ENCODE measurements at regions of chr7 and their contacts with region 1.

Region 1: DNA sequence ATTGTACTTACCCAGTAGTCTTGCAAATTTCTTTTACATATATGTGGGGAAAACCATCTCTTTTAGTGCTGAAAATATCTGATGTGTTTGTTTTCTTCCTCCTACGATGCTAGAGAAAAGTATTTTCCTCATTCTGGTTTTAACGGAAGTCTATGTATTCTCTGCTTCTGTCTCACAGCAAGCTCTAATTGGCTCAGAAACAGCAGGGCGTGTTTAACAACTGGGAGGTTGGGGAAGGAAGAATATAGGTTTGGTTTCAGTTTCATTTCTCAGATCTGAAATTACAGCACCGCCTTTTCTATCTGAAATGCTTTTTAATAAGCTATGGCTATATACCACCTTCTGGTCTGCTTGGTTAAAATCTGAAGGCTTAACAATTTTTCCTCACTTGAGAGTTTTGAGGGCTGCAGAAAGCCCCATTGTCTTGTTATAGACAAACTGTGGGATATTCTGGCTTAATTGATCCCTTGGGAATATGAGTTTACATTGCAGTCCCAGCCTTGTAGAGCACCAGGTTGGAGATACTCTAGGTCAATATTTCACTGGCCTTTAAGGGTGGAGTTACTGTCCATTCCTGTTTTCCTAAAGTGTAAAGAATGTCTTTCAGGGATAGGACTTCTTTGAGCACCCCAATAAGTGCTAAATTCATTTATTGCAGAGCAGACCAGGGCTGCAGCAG is at the start of gene SAMD9:
- DNase-seq: peak; percentile 86
- ATAC-seq: peak; percentile 99
- H3K4me3 ChIP-seq: peak within 1 kb of the TSS; percentile 41 to 92 (median 59)
- H3K4me3 Mint-ChIP-seq: peak within 1 kb of the TSS; percentile 85
- H3K27ac ChIP-seq: peak within 1 kb of the TSS; percentile 56 to 83
- H3K27ac Mint-ChIP-seq: peak within 1 kb of the TSS; percentile 74
- H3K4me1 ChIP-seq: peaks cover 18 to 33% of the 10 kb centered on the region in 2 donors
- H3K4me1 Mint-ChIP-seq: peaks cover 44% of the 10 kb centered on the region
- H3K27me3 ChIP-seq: no peaks in the 10 kb centered on the region
- H3K27me3 Mint-ChIP-seq: no peaks in the 10 kb centered on the region
- CTCF ChIP-seq: no peak
- total RNA-seq, gene SAMD9: 39.2 and 42.1 TPM in 2 replicates

Region 2: GRCh38 chr7:92134271-92135051 is 983.5 kb before region 1 on chr7 and contains the start of gene CYP51A1:
- CTCF ChIA-PET with region 1: no interaction called
- POLR2A ChIA-PET with region 1: no interaction called
- intact Hi-C with region 1: loop called (anchors 10 kb)
- DNase-seq: peak; percentile 99
- ATAC-seq: peak; percentile 84
- H3K4me3 ChIP-seq: peak within 1 kb of the TSS; percentile 86 to 94 (median 90)
- H3K4me3 Mint-ChIP-seq: peak within 1 kb of the TSS; percentile 99
- H3K27ac ChIP-seq: peak within 1 kb of the TSS; percentile 94 to 98
- H3K27ac Mint-ChIP-seq: peak within 1 kb of the TSS; percentile 100
- H3K4me1 ChIP-seq: peaks cover 18 to 27% of the 10 kb centered on the region in 2 donors
- H3K4me1 Mint-ChIP-seq: peaks cover 39% of the 10 kb centered on the region
- H3K27me3 ChIP-seq: no peaks in the 10 kb centered on the region
- H3K27me3 Mint-ChIP-seq: no peaks in the 10 kb centered on the region
- CTCF ChIP-seq: no peak
- total RNA-seq, gene CYP51A1: 36.1 and 37.9 TPM in 2 replicates

Region 3: DNA sequence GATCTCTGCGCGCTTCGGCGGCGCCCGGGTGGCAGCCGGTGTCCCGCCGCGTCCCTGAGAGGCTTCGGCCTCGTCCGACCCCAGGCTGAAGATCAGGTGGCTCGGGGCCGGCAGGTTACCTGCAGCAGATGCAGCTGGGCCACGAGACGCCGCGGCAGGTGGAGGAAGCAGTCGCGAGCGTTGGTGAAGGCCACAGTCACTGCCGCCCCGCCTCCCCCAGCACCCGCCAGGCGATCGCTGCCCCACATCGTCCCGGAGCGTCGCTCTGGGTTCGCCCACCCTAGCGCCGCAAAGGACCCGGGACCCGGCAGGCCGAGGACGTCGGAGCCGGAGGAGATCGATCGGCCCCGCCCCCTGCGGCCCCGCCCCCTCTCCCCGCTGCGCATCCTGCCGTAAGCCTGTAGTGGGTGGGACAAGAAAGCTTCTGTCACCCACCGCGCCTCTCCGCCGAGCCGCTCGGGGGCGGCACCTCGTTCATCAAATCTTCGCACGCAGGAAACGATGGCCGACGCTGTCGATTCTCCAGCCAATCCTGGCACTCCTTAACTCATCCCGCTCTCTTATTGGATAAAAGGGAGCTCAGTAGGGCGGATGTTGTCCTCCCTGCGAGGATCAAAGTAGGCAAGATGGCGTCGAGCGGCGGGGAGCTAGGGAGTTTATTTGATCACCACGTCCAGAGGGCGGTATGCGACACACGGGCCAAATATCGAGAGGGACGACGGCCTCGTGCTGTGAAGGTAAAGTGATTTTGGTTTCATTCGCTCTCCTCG is 589.6 kb before region 1 on chr7 and contains the starts of genes PEX1 and RBM48:
- CTCF ChIA-PET with region 1: no interaction called
- POLR2A ChIA-PET with region 1: interaction called, 6 read pairs
- intact Hi-C with region 1: loop called (anchors 2 kb)
- DNase-seq: peak; percentile 98
- ATAC-seq: peak; percentile 91
- H3K4me3 ChIP-seq: peak within 1 kb of the TSS; percentile 81 to 99 (median 95)
- H3K4me3 Mint-ChIP-seq: peak within 1 kb of the TSS; percentile 88
- H3K27ac ChIP-seq: peak within 1 kb of the TSS; percentile 89 to 96
- H3K27ac Mint-ChIP-seq: peak within 1 kb of the TSS; percentile 95
- H3K4me1 ChIP-seq: peaks cover 14 to 19% of the 10 kb centered on the region in 2 donors
- H3K4me1 Mint-ChIP-seq: peaks cover 26% of the 10 kb centered on the region
- H3K27me3 ChIP-seq: no peaks in the 10 kb centered on the region
- H3K27me3 Mint-ChIP-seq: no peaks in the 10 kb centered on the region
- CTCF ChIP-seq: peak; percentile 31
- total RNA-seq, gene PEX1: 33.7 and 34.8 TPM in 2 replicates
- total RNA-seq, gene RBM48: 32.9 and 36.8 TPM in 2 replicates

Region 4: GRCh38 chr7:92590711-92591310 is 527.2 kb before region 1 on chr7:
- CTCF ChIA-PET with region 1: no interaction called
- POLR2A ChIA-PET with region 1: no interaction called
- intact Hi-C with region 1: loop called (anchors 2 kb)
- DNase-seq: no peak
- ATAC-seq: no peak
- H3K4me3 ChIP-seq: peak overlapping the region in 4 of 5 experiments; percentile 84 to 88 (median 86)
- H3K4me3 Mint-ChIP-seq: peak overlapping the region; percentile 94
- H3K27ac ChIP-seq: no peak overlapping the region
- H3K27ac Mint-ChIP-seq: peak overlapping the region; percentile 11
- H3K4me1 ChIP-seq: peaks cover 22 to 25% of the 10 kb centered on the region in 2 donors
- H3K4me1 Mint-ChIP-seq: peaks cover 41% of the 10 kb centered on the region
- H3K27me3 ChIP-seq: no peaks in the 10 kb centered on the region
- H3K27me3 Mint-ChIP-seq: no peaks in the 10 kb centered on the region
- CTCF ChIP-seq: no peak

Region 5: GRCh38 chr7:93147363-93147762 is 29.4 kb after region 1 on chr7:
- CTCF ChIA-PET with region 1: interaction called, 5 read pairs
- POLR2A ChIA-PET with region 1: no interaction called
- intact Hi-C with region 1: loop called (anchors 1 kb)
- DNase-seq: peak; percentile 43
- ATAC-seq: peak; percentile 67
- H3K4me3 ChIP-seq: peak overlapping the region; percentile 43 to 93 (median 62)
- H3K4me3 Mint-ChIP-seq: peak overlapping the region; percentile 90
- H3K27ac ChIP-seq: peak overlapping the region in 1 of 2 donors; percentile 85
- H3K27ac Mint-ChIP-seq: peak overlapping the region; percentile 85
- H3K4me1 ChIP-seq: peaks cover 40 to 47% of the 10 kb centered on the region in 2 donors
- H3K4me1 Mint-ChIP-seq: peaks cover 48% of the 10 kb centered on the region
- H3K27me3 ChIP-seq: no peaks in the 10 kb centered on the region
- H3K27me3 Mint-ChIP-seq: no peaks in the 10 kb centered on the region
- CTCF ChIP-seq: no peak

Region 6: GRCh38 chr7:93165447-93165846 is 47.5 kb after region 1 on chr7:
- CTCF ChIA-PET with region 1: no interaction called
- POLR2A ChIA-PET with region 1: no interaction called
- intact Hi-C with region 1: loop called (anchors 5 kb)
- DNase-seq: peak; percentile 77
- ATAC-seq: peak; percentile 93
- H3K4me3 ChIP-seq: peak overlapping the region in 2 of 5 experiments; percentile 5 to 15
- H3K4me3 Mint-ChIP-seq: peak overlapping the region; percentile 38
- H3K27ac ChIP-seq: peak overlapping the region; percentile 59 to 81
- H3K27ac Mint-ChIP-seq: peak overlapping the region; percentile 74
- H3K4me1 ChIP-seq: peaks cover 4 to 8% of the 10 kb centered on the region in 2 donors
- H3K4me1 Mint-ChIP-seq: peaks cover 19% of the 10 kb centered on the region
- H3K27me3 ChIP-seq: no peaks in the 10 kb centered on the region
- H3K27me3 Mint-ChIP-seq: no peaks in the 10 kb centered on the region
- CTCF ChIP-seq: no peak

Region 7: GRCh38 chr7:93185303-93186027 is 67.5 kb after region 1 on chr7:
- CTCF ChIA-PET with region 1: no interaction called
- POLR2A ChIA-PET with region 1: no interaction called
- intact Hi-C with region 1: no loop called
- DNase-seq: no peak
- ATAC-seq: no peak
- H3K4me3 ChIP-seq: no peak overlapping the region
- H3K4me3 Mint-ChIP-seq: no peak overlapping the region
- H3K27ac ChIP-seq: no peak overlapping the region
- H3K27ac Mint-ChIP-seq: no peak overlapping the region
- H3K4me1 ChIP-seq: no peaks in the 10 kb centered on the region
- H3K4me1 Mint-ChIP-seq: no peaks in the 10 kb centered on the region
- H3K27me3 ChIP-seq: peaks cover 0 to 13% (median 4%) of the 10 kb centered on the region in 4 experiments
- H3K27me3 Mint-ChIP-seq: peaks cover 45% of the 10 kb centered on the region
- CTCF ChIP-seq: no peak

Region 8: GRCh38 chr7:93390660-93391059 is 272.7 kb after region 1 on chr7:
- CTCF ChIA-PET with region 1: no interaction called
- POLR2A ChIA-PET with region 1: no interaction called
- intact Hi-C with region 1: no loop called
- DNase-seq: no peak
- ATAC-seq: no peak
- H3K4me3 ChIP-seq: no peak overlapping the region
- H3K4me3 Mint-ChIP-seq: no peak overlapping the region
- H3K27ac ChIP-seq: no peak overlapping the region
- H3K27ac Mint-ChIP-seq: no peak overlapping the region
- H3K4me1 ChIP-seq: no peaks in the 10 kb centered on the region
- H3K4me1 Mint-ChIP-seq: no peaks in the 10 kb centered on the region
- H3K27me3 ChIP-seq: peaks cover 0 to 3% (median 0%) of the 10 kb centered on the region in 4 experiments
- H3K27me3 Mint-ChIP-seq: peaks cover 27% of the 10 kb centered on the region
- CTCF ChIP-seq: no peak

Region 9: DNA sequence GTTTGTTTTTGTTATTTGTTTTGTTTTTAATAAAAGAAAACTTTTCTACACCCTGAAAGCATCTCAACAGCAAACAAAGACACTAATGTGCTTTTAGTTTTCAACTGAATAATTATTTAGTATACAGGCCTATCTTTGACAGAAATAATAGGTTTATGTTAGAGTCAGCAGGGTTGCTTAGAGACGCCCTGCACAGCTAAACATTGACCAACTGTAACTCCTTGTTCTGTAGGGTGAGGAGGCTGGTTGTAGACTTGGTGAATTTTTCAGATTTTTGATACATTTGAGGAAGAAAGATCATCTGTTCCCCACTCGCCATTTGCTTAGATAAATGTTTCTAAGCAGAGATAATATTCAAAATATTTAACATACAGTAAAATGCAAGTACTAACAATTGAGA is 353.5 kb after region 1 on chr7:
- CTCF ChIA-PET with region 1: no interaction called
- POLR2A ChIA-PET with region 1: no interaction called
- intact Hi-C with region 1: no loop called
- DNase-seq: no peak
- ATAC-seq: no peak
- H3K4me3 ChIP-seq: no peak overlapping the region
- H3K4me3 Mint-ChIP-seq: no peak overlapping the region
- H3K27ac ChIP-seq: no peak overlapping the region
- H3K27ac Mint-ChIP-seq: no peak overlapping the region
- H3K4me1 ChIP-seq: no peaks in the 10 kb centered on the region
- H3K4me1 Mint-ChIP-seq: no peaks in the 10 kb centered on the region
- H3K27me3 ChIP-seq: peaks cover 0 to 4% (median 0%) of the 10 kb centered on the region in 4 experiments
- H3K27me3 Mint-ChIP-seq: peaks cover 12% of the 10 kb centered on the region
- CTCF ChIP-seq: no peak

Region 10: DNA sequence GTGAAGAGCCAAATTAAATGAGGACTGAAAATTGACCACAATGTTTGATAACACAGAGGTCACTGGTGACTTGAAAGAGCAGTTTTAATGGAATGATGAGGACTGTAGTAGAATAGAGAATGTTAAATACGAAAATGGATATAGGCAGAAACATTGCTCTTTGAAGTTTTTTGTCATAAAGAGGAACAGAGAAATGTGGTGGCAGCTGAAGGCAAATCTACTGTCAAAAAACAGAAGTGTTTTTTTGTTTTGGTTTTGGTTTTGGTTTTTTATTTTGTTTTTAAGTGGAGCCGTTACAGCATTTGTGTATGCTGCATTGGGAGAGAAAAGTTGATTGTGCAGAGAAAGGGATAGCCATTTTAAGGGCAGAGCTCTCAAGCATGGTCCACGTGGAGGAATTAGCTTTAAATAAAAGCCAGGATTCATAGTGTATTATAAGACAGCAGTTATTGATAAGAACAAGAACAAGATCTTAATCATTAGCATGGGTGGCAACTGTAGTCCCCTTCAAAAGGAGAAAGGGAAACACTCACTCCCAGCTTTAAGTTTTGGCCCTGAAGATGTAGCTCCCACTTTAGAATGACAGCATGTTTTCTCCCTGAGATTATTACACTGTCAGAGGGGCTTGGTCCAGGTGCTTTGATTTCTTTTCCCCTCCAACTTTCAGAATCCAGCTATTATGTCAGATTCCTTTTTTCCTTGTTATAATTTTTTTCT is 1042.9 kb after region 1 on chr7:
- CTCF ChIA-PET with region 1: no interaction called
- POLR2A ChIA-PET with region 1: no interaction called
- intact Hi-C with region 1: loop called (anchors 2 kb)
- DNase-seq: peak; percentile 79
- ATAC-seq: peak; percentile 82
- H3K4me3 ChIP-seq: peak overlapping the region; percentile 1 to 52 (median 33)
- H3K4me3 Mint-ChIP-seq: peak overlapping the region; percentile 84
- H3K27ac ChIP-seq: peak overlapping the region; percentile 73 to 90
- H3K27ac Mint-ChIP-seq: peak overlapping the region; percentile 93
- H3K4me1 ChIP-seq: peaks cover 25 to 29% of the 10 kb centered on the region in 2 donors
- H3K4me1 Mint-ChIP-seq: peaks cover 49% of the 10 kb centered on the region
- H3K27me3 ChIP-seq: no peaks in the 10 kb centered on the region
- H3K27me3 Mint-ChIP-seq: no peaks in the 10 kb centered on the region
- CTCF ChIP-seq: no peak

Measured in B cell (primary cell).